Activated T-helper 1 cell treated with anti-CD3 and anti-CD28 coated beads, Interleukin-12 subunit alpha, Interleukin-12 subunit beta, Interleukin-2, Interleukin-4 antibody, amounts not matched to agents 30 ng/mL and 10 ng/mL and 1 ng/mL, durations not matched to agents 14 hours and 24 hours and 36 hours (primary cell): ENCODE measurements at regions of chr1 and their contacts with region 1.

Region 1: GRCh38 chr1:117664314-117664713 is 58.5 kb downstream of the TENT5C start:
- DNase-seq: peak; percentile 73
- H3K4me3 Mint-ChIP-seq: peak overlapping the region; percentile 57
- H3K27ac Mint-ChIP-seq: peak overlapping the region; percentile 84
- H3K4me1 Mint-ChIP-seq: peaks cover 88% of the 10 kb centered on the region
- H3K27me3 Mint-ChIP-seq: peaks cover 6% of the 10 kb centered on the region

Region 2: DNA sequence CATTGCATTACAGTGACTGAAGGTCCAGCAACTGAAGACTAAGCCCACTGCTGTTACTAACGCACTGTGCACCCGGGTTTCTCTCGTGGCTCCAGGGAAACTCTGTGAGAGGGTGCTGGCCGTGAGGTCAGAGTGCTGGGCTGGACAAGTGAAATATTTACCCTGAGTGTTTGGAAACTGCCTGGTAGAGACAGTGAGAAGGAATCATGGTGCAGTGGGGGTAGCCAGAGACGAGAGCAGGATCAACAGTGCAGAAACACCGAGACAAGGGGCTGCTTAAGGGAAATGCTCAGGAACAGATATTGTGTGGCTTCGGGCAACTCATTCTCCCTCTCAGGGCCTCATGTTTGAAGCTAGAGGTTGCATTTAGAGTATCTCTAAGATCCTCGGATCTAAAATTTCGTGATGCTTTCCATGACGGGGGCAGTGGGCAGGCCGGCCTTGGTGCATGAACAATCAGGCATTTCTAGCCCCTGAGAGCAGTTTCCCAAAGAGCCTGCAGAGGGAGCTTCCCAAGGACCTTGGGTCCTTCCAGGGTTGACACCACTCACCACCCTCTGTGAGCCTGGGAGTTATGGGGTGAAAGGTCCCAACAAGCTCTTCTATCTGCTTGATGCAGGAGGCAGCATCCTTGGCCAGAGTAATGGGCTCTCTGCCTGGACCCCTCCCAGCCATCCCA is 900.4 kb before region 1 on chr1:
- intact Hi-C with region 1: loop called (anchors 10 kb)
- DNase-seq: peak; percentile 50
- H3K4me3 Mint-ChIP-seq: peak overlapping the region; percentile 84
- H3K27ac Mint-ChIP-seq: peak overlapping the region; percentile 100
- H3K4me1 Mint-ChIP-seq: peaks cover 95% of the 10 kb centered on the region
- H3K27me3 Mint-ChIP-seq: peaks cover 3% of the 10 kb centered on the region

Region 3: GRCh38 chr1:117077267-117077666 is 587.0 kb before region 1 on chr1:
- intact Hi-C with region 1: loop called (anchors 5 kb)
- DNase-seq: no peak
- H3K4me3 Mint-ChIP-seq: no peak overlapping the region
- H3K27ac Mint-ChIP-seq: peak overlapping the region; percentile 75
- H3K4me1 Mint-ChIP-seq: peaks cover 22% of the 10 kb centered on the region
- H3K27me3 Mint-ChIP-seq: no peaks in the 10 kb centered on the region

Region 4: GRCh38 chr1:117605774-117606648 is 58.3 kb before region 1 on chr1 and contains the start of gene TENT5C:
- intact Hi-C with region 1: loop called (anchors 1 kb)
- DNase-seq: peak; percentile 98
- H3K4me3 Mint-ChIP-seq: peak within 1 kb of the TSS; percentile 91
- H3K27ac Mint-ChIP-seq: peak within 1 kb of the TSS; percentile 80
- H3K4me1 Mint-ChIP-seq: peaks cover 56% of the 10 kb centered on the region
- H3K27me3 Mint-ChIP-seq: peaks cover 26% of the 10 kb centered on the region
- total RNA-seq, gene TENT5C: 4.9 and 5.2 TPM in 2 replicates

Region 5: GRCh38 chr1:117895482-117896114 is 231.3 kb after region 1 on chr1:
- intact Hi-C with region 1: loop called (anchors 10 kb)
- DNase-seq: peak; percentile 32
- H3K4me3 Mint-ChIP-seq: no peak overlapping the region
- H3K27ac Mint-ChIP-seq: no peak overlapping the region
- H3K4me1 Mint-ChIP-seq: peaks cover 7% of the 10 kb centered on the region
- H3K27me3 Mint-ChIP-seq: no peaks in the 10 kb centered on the region

Region 6: DNA sequence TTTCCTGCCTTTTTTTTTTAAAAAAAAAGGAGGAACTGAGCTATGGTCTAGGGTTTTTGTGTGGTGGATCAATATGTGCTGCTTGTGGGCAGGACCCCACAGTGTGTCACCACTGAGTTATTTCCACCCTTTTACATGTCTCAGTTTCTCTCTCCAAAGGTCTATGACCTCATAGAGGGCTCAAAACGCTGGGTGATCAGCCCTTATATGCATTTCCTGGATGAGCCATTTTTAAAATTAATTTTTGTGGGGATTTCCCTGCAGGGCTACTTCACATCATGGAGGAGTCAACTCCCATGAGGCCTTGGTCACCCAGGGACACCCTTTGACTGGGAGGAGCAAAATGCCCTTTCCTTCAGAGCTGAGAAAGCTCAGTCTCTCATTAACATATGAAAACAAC is 1683.5 kb after region 1 on chr1:
- intact Hi-C with region 1: loop called (anchors 5 kb)
- DNase-seq: no peak
- H3K4me3 Mint-ChIP-seq: no peak overlapping the region
- H3K27ac Mint-ChIP-seq: no peak overlapping the region
- H3K4me1 Mint-ChIP-seq: no peaks in the 10 kb centered on the region
- H3K27me3 Mint-ChIP-seq: peaks cover 4% of the 10 kb centered on the region